ENCODE measurements at regions of chr12 and their contacts with region 1.

Region 1: DNA sequence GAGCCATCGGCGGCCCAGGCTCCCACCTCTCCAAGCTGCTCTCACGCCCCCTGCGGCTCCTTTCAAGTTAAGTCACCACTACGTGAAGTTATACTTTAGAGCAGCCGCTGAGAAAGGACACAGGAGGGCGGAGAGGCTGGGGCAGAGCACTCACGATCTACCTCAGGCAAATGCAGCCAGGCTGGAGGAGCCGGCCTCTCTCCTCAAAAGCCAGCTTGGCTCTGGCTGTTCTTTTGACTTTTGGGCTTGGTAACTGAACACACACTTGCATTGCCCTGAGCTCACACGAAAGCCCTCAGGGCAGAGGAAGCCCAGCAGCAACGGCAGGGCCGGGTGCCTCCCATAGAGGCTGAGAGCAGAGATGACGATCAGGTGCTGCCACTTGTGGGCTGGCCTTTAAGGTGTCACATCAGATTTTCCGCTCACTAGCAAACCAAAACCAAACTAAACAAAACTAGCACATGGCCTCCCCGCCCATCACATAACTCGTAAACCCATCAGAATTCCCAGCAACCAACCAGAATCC is 75.2 kb downstream of the PITPNM2 start:
- DNase-seq: peak; percentile 79
- ATAC-seq: peak; percentile 82
- H3K4me3 Mint-ChIP-seq: peak overlapping the region; percentile 84
- H3K27ac Mint-ChIP-seq: peak overlapping the region; percentile 97
- H3K4me1 Mint-ChIP-seq: peaks cover 45% of the 10 kb centered on the region
- H3K27me3 Mint-ChIP-seq: no peaks in the 10 kb centered on the region

Region 2: DNA sequence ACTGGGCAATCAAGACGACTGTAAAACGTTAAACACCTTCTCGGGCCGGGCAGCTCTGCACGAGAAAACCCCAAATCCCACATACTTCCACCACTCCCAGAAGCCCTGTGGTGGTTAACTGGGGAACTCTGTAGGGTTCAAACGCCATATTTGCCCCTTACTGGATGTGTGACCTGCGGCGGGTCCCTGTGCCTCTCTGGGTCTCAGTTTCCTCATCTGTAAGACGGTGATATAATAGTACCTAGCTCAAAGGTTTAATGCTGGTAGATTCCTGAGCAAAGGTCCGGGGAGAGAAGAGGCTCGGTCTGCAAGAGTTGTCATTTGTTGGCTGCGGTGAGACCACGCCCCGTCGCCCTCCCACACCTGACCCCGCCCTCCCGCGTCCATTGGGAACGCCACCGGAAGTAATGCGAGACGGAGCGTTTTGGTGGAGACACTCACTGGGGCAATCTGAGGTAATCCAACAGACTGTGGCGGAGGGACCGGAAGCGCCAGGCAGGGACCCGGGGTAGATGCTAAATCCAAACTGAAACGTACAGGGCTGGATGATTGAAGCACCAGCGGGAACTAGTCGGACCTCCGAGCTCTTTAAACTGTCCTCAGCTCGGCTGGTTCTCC is 101.3 kb before region 1 on chr12:
- POLR2A ChIA-PET with region 1: interaction called, 18 read pairs
- DNase-seq: peak; percentile 98
- ATAC-seq: peak; percentile 80
- H3K4me3 Mint-ChIP-seq: peak overlapping the region; percentile 94
- H3K27ac Mint-ChIP-seq: peak overlapping the region; percentile 98
- H3K4me1 Mint-ChIP-seq: peaks cover 13% of the 10 kb centered on the region
- H3K27me3 Mint-ChIP-seq: no peaks in the 10 kb centered on the region

Region 3: GRCh38 chr12:123043536-123044001 is 32.1 kb before region 1 on chr12:
- POLR2A ChIA-PET with region 1: interaction called, 42 read pairs
- DNase-seq: peak; percentile 75
- ATAC-seq: peak; percentile 97
- H3K4me3 Mint-ChIP-seq: peak overlapping the region; percentile 50
- H3K27ac Mint-ChIP-seq: peak overlapping the region; percentile 78
- H3K4me1 Mint-ChIP-seq: peaks cover 30% of the 10 kb centered on the region
- H3K27me3 Mint-ChIP-seq: no peaks in the 10 kb centered on the region

Region 4: GRCh38 chr12:123106628-123107359 is 31.1 kb after region 1 on chr12:
- POLR2A ChIA-PET with region 1: interaction called, 50 read pairs
- DNase-seq: peak; percentile 73
- ATAC-seq: peak; percentile 98
- H3K4me3 Mint-ChIP-seq: peak overlapping the region; percentile 71
- H3K27ac Mint-ChIP-seq: peak overlapping the region; percentile 99
- H3K4me1 Mint-ChIP-seq: peaks cover 56% of the 10 kb centered on the region
- H3K27me3 Mint-ChIP-seq: no peaks in the 10 kb centered on the region

Region 5: GRCh38 chr12:123131879-123132452 is 56.3 kb after region 1 on chr12:
- POLR2A ChIA-PET with region 1: interaction called, 12 read pairs
- DNase-seq: peak; percentile 66
- ATAC-seq: peak; percentile 92
- H3K4me3 Mint-ChIP-seq: peak overlapping the region; percentile 79
- H3K27ac Mint-ChIP-seq: peak overlapping the region; percentile 89
- H3K4me1 Mint-ChIP-seq: peaks cover 26% of the 10 kb centered on the region
- H3K27me3 Mint-ChIP-seq: no peaks in the 10 kb centered on the region